ENCODE measurements at regions of chr10 and their contacts with region 1.

Region 1: DNA sequence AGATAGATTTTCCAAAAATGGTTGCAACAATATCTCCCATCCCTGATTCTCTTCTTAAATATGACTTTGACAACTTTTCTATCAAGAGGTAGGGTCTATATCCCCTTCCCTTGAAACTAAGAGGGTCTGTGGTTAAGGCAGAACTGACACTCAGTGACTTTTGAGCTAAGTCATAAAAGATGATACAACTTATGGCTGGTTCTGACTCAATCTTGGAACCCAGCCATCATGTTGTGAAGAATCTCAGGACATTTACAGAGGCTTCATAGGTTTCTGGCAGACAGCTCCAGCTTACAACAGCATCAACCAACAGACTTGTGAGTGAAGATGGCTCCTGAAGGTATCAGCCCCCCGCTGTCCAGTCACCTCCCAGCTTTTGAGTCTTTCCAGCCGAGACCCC is 203.5 kb downstream of the RNLS start:
- DNase-seq: no peak
- ATAC-seq: no peak

Region 2: GRCh38 chr10:88152720-88153119 is 226.9 kb before region 1 on chr10:
- intact Hi-C with region 1: loop called (anchors 10 kb)
- DNase-seq: no peak
- ATAC-seq: no peak

Region 3: GRCh38 chr10:88165849-88166271 is 213.7 kb before region 1 on chr10:
- intact Hi-C with region 1: no loop called
- DNase-seq: no peak
- ATAC-seq: no peak

Region 4: GRCh38 chr10:88493691-88494483 is 114.3 kb after region 1 on chr10:
- intact Hi-C with region 1: no loop called
- DNase-seq: no peak
- ATAC-seq: no peak

Region 5: GRCh38 chr10:88525371-88526079 is 145.9 kb after region 1 on chr10:
- intact Hi-C with region 1: no loop called
- DNase-seq: no peak
- ATAC-seq: no peak

Measured in Right ventricle myocardium superior (tissue), 1 donor.